ENCODE measurements at regions of chr6 and their contacts with region 1.

Region 1: DNA sequence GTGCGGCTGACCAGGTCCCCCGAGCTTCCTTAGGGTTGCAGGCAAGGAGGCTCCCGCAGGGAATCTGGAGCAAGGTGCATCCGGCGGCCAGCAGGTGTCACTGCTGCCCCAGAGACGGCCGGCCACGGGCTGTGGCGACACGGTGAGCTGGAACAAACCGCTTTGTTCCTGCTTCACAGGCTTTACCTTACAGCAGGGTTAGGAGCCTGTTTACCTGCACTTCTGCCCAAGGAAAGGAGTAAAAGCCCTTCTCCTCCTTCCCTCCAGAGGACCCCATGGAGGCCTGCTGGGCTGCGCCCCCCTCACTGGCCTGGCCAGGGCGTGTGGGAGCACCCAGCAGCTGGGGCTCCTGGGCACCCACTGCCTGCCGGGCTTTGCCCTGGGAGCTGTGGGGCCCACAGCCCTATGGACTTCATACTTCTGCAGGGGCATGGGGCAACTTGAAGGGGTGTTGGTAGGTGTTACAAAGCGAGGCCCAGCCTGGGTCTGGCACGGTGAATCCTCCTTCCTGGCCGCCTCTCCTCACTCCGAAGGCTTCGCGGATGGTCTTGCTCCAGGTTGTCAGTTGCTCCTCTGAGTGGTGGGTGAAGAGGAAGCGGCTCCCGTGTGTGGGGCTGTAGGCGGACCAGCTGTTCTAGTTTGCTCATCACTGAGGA is 88.4 kb downstream of the CDC5L start:
- DNase-seq: peak; percentile 90
- ATAC-seq: peak; percentile 87
- H3K4me3 ChIP-seq: peak overlapping the region; percentile 18; the same call in 1 of the 2 replicates
- H3K27ac ChIP-seq: no peak overlapping the region
- H3K4me1 ChIP-seq: peaks cover 23% of the 10 kb centered on the region
- H3K27me3 ChIP-seq: no peaks in the 10 kb centered on the region
- CTCF ChIP-seq: peak; percentile 93

Region 2: GRCh38 chr6:44489910-44490604 is 14.2 kb after region 1 on chr6:
- CTCF ChIA-PET with region 1: interaction called, 10 read pairs
- POLR2A ChIA-PET with region 1: no interaction called
- intact Hi-C with region 1: loop called (anchors 1 kb)
- DNase-seq: peak; percentile 96
- ATAC-seq: peak; percentile 73
- H3K4me3 ChIP-seq: peak overlapping the region; percentile 48
- H3K27ac ChIP-seq: peak overlapping the region; percentile 89
- H3K4me1 ChIP-seq: peaks cover 39% of the 10 kb centered on the region
- H3K27me3 ChIP-seq: no peaks in the 10 kb centered on the region
- CTCF ChIP-seq: no peak

Region 3: DNA sequence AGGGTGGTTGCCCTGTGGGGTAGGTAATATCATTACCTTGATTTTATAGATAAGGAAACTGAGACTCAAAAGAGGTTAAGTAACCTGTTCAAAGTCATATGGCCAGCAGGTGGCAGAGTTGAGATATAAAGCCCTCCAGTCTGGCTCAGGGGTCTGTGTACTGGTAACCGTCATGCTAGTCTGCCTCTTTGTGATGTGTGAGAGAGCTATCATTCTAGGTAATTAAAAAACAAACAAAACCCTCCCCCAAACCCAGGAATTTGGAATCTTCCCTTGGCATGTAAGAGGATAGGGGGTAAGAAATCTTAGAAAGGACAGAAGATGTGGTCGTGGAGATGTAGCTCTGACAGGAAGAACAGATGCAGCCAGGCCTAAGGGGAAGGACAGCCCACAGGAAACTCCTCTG is 117.6 kb after region 1 on chr6:
- CTCF ChIA-PET with region 1: interaction called, 4 read pairs
- POLR2A ChIA-PET with region 1: no interaction called
- intact Hi-C with region 1: loop called (anchors 1 kb)
- DNase-seq: peak; percentile 74
- ATAC-seq: peak; percentile 51
- H3K4me3 ChIP-seq: no peak overlapping the region
- H3K27ac ChIP-seq: no peak overlapping the region
- H3K4me1 ChIP-seq: no peaks in the 10 kb centered on the region
- H3K27me3 ChIP-seq: peaks cover 3% of the 10 kb centered on the region; the same call in 1 of the 2 replicates
- CTCF ChIP-seq: peak; percentile 86

Region 4: GRCh38 chr6:44630125-44631028 is 154.5 kb after region 1 on chr6:
- CTCF ChIA-PET with region 1: interaction called, 33 read pairs
- POLR2A ChIA-PET with region 1: interaction called, 4 read pairs
- intact Hi-C with region 1: no loop called
- DNase-seq: peak; percentile 71
- ATAC-seq: peak; percentile 97
- H3K4me3 ChIP-seq: no peak overlapping the region
- H3K27ac ChIP-seq: no peak overlapping the region
- H3K4me1 ChIP-seq: no peaks in the 10 kb centered on the region
- H3K27me3 ChIP-seq: no peaks in the 10 kb centered on the region
- CTCF ChIP-seq: peak; percentile 88

Region 5: GRCh38 chr6:44645276-44645675 is 169.4 kb after region 1 on chr6:
- CTCF ChIA-PET with region 1: interaction called, 5 read pairs
- POLR2A ChIA-PET with region 1: no interaction called
- intact Hi-C with region 1: loop called (anchors 2 kb)
- DNase-seq: peak; percentile 10
- ATAC-seq: no peak
- H3K4me3 ChIP-seq: no peak overlapping the region
- H3K27ac ChIP-seq: no peak overlapping the region
- H3K4me1 ChIP-seq: peaks cover 25% of the 10 kb centered on the region
- H3K27me3 ChIP-seq: no peaks in the 10 kb centered on the region
- CTCF ChIP-seq: peak; percentile 16; the same call in 1 of the 2 replicates

Region 6: DNA sequence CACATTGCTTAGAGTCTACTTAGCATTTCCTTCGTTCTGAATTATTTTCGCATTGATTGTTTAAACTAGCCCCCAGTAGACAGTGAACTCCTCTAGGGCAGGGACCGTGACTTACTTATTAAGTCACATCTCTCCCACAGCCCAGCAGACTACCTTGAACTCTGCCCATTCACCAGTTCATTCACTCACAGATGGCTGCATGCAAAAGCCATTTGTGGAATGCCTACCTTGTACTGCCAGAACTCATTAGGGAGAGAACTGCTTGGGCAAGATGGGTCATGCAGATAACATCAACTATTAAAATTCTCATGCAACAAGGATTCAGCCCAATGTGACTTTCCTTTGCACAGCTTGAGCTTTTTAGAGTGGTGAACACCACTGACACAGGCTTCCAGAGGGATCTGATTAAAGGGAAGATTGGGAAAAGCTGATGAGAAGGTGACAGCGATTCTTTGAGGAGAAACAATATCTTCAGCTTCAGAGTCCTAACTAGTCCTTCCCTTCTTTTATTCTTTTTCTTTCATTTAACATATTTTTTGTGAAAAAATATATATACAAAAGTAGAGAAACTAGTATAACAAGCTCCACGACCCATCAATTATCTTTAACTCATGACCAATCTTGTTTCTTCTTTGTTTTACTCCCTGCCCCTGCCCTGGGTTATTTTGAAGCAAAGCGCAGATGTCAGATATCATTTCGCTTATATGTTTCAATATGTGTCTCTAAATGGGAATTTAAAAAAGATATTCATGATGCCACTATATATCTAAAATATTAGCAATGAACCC is 185.5 kb after region 1 on chr6:
- CTCF ChIA-PET with region 1: interaction called, 10 read pairs
- POLR2A ChIA-PET with region 1: no interaction called
- intact Hi-C with region 1: no loop called
- DNase-seq: peak; percentile 34
- ATAC-seq: no peak
- H3K4me3 ChIP-seq: no peak overlapping the region
- H3K27ac ChIP-seq: no peak overlapping the region
- H3K4me1 ChIP-seq: no peaks in the 10 kb centered on the region
- H3K27me3 ChIP-seq: no peaks in the 10 kb centered on the region
- CTCF ChIP-seq: no peak